H1 (cell line): ENCODE measurements at regions of chr12 and their contacts with region 1.

Region 1: DNA sequence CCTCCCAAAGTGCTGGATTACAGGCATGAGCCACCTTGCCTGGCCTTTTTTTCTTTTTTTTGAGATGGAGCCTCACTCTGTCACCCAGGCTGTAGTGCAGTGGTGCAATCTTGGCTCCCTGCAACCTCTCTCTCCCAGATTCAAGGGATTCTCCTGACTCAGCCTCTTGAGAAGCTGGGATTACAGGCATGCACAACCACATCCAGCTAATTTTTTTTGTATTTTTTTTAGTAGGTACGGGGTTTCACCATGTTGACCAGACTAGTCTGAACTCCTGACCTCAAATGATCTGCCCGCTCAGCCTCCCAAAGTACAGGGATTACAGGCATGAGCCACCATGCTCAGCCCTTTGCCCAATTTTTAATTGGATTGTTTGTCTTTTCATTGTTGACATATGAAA is 58.0 kb downstream of the SINHCAF start:
- DNase-seq: no peak
- H3K4me3 ChIP-seq: no peak overlapping the region
- H3K27ac ChIP-seq: no peak overlapping the region
- H3K4me1 ChIP-seq: no peaks in the 10 kb centered on the region; a peak in 1 of 7 replicates
- H3K27me3 ChIP-seq: no peaks in the 10 kb centered on the region
- CTCF ChIP-seq: no peak
- EP300 ChIP-seq: no peak
- POLR2A ChIP-seq: no peak
- RAD21 ChIP-seq: no peak

Region 2: DNA sequence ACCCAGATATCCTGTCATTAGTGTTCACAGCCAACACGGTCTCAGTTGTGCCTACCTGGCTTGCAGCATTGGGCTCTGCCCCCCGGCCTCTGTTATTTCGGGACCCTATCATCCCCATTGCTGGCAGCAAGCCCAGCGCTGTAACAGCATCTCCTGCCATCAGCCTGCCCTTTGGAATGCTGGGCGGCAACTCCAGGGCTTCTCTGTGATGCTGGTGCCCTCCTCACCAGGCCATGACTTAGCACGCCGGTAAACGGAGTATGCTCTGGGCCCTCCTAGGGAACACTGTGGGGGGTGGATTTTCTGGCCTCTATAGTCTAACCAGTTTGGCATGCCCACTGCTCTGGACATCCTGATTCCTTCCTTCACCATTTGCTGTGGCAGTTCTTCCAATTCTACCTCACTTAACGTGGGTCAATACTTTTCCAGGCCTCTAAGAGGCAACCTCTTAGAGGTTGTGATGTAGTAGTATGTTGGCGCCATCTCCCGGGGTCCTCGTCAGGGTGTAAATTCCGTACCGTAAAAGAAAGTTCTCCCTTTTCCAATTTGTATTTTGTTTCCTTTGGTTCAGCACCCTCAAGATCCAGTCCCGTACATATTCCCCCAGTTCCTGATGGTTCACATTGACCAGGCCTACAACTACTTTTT is 22.0 kb before region 1 on chr12:
- CTCF ChIA-PET with region 1: interaction called, 80 read pairs
- POLR2A ChIA-PET with region 1: interaction called, 5 read pairs
- DNase-seq: no peak
- H3K4me3 ChIP-seq: no peak overlapping the region
- H3K27ac ChIP-seq: no peak overlapping the region
- H3K4me1 ChIP-seq: peaks cover 0 to 7% (median 2%) of the 10 kb centered on the region in 4 experiments; a peak in 2 of 7 replicates
- H3K27me3 ChIP-seq: no peaks in the 10 kb centered on the region
- CTCF ChIP-seq: peak; percentile 22 to 98 (median 66)
- EP300 ChIP-seq: no peak
- POLR2A ChIP-seq: no peak
- RAD21 ChIP-seq: peak; percentile 79 to 87